Cardiac septum (tissue), 1 donor: ENCODE measurements at regions of chr11 and their contacts with region 1.

Region 1: GRCh38 chr11:112289588-112290492 is 29.2 kb upstream of the PLET1 start:
- DNase-seq: peak; percentile 94

Region 2: DNA sequence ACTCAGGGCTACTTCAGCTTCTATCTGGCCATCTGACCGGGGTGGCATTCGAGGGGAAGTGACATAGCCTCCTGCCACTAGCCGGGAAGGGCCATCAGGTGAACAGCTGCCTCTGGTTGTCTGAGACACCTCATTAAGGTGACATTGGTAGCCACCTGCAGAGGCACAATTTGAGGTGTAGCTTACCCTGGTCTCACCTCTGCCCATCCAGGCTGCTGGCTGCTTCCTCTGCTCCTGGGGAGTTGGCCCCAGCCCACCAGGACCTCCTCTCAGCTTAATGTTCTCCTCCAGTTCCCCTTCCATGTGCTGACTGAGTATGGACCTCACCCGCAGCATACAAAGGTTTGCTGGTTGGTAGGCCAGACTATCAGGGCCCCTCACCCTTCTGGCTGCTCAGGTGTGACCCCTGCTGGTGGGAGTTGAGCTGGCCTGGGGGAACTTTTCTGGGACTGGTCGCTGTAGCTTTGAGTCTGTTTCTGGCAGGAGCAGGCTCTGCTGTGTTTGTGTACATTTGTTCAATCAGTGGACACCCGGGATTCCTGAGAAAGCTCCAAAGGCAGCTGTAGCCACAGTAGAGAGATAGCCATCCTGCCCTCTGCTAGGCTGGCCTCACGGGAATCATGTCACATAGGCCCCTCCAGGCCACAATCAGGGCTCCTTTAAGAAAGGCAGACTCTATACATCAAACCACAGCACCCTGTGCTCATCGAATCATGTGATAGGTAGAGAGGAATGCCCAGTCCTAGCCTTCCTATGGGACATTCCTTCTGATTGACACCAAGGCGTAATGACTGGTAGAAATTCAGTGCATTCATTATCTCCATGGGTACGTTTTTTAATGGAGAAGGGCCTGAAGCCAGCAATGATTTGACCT is 265.9 kb after region 1 on chr11:
- intact Hi-C with region 1: loop called (anchors 5 kb)
- DNase-seq: no peak

Region 3: DNA sequence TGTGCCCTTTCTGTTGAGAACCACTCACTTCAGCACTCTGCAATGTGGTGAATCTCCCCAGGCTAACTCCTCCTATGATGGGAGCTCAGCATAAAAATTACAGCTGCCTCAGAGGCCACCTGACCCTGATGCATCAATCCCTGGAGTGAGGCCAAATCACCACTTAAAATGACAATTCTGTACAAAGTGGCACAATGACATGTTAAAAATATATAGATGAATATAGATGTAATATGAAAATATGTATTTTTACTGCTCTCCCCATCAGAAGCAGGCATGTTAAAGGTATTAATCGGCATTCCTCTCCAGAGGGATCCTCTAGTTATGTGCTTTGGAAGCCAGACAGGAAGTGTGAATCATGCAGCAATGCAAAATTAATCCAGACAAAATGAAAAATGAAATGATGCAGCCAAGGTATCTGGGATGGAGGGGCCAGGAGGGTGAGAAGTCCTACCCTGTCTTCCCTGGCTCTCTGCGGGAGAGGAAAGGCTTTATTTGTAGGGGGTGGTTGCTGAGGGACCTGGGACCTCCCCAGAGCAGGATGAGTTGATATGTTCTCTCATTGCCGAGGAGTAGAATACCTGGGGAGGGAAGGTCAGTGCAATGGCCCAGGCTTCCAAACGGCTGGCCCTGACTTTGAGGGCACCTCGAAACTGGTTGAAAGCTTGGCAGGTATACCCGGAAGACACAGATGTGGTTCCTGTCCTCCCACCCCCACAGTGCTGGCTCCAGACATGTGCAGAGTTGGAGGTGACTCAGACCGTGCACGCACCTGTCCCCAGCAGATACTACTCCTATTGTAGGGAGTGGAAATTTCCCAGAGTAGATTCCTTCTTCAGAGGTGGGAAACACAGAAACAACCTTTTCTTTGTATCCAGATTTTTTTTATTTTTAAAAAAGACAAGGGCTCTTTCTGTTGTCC is 323.5 kb after region 1 on chr11:
- intact Hi-C with region 1: no loop called
- DNase-seq: no peak

Region 4: DNA sequence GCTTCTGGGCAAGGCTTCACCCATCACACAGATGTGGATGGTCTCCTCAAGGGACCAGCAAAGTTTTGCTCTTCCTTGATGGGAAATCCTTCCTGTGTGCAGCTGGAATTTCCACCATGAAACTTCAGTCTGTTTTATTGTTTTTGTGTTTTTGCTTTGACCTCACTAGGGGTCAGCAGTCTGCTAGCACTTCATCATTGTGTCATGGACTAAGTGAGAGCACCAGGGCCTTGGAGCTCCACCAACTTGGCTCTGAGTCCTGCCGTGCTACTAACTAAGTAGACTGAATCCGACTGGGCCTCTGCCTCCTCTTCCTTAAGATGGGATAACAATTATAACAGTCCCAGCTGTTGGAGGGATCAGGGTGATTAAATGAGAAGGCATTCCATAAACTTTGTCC is 365.5 kb after region 1 on chr11:
- intact Hi-C with region 1: loop called (anchors 10 kb)
- DNase-seq: peak; percentile 86

Region 5: GRCh38 chr11:112852143-112852866 is 562.5 kb after region 1 on chr11:
- intact Hi-C with region 1: loop called (anchors 10 kb)
- DNase-seq: no peak

Region 6: GRCh38 chr11:113113801-113114706 is 824.2 kb after region 1 on chr11:
- intact Hi-C with region 1: loop called (anchors 10 kb)
- DNase-seq: no peak